Activated naive CD4-positive, alpha-beta T cell treated with anti-CD3 and anti-CD28 coated beads for 36 hours (primary cell): ENCODE measurements at regions of chrX and their contacts with region 1.

Region 1: DNA sequence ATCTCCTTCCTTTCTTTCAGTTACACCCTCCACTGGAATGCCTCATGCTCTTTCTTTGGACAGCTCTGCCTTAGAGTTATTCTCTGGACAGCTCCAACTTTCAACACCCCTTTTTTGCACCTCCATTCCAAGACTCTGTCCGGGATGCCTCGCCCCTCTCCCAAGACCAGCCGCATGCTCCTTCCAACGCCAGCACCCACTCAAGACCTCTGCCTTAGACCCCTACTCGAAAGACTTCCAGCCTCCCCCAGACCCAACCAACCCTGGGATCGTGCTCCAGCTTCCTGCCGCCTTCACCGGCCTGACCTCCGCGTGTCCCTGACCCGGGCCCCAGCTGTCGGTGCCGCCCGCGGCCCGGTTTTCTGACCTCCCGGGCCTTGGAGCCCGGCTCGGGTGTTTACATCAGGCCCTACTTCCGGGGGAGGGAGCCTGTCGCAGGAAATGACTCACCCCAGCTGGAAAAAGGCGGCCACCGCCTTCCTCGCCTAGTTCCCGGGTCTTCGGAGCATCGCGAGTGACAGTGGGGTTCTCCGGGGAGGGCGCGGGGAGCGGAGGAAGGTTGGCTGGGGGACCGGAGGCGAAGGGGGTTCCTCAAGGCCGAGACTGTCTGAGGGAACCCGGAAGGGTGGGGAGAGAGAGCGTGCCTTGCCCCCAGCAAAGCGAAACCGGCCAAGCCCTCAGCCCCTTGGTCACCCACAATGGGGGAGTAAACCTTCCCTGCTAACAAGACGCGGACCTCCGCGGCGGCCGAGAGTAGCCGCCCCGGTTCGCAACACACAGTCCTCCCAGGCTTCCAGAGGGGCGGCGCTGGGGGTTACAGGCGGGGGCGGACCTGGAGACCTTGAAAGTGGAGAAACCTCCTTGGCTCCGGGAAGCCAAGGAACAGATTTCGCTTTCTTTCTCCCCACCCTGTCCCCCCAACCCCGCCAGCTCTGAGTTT is at the start of gene WDR45:
- DNase-seq: peak; percentile 79
- H3K4me3 Mint-ChIP-seq: peak within 1 kb of the TSS; percentile 94
- H3K27ac Mint-ChIP-seq: peak within 1 kb of the TSS; percentile 96
- H3K4me1 Mint-ChIP-seq: peaks cover 11% of the 10 kb centered on the region
- H3K27me3 Mint-ChIP-seq: no peaks in the 10 kb centered on the region
- total RNA-seq, gene WDR45: 17.9 to 22.5 TPM

Region 2: DNA sequence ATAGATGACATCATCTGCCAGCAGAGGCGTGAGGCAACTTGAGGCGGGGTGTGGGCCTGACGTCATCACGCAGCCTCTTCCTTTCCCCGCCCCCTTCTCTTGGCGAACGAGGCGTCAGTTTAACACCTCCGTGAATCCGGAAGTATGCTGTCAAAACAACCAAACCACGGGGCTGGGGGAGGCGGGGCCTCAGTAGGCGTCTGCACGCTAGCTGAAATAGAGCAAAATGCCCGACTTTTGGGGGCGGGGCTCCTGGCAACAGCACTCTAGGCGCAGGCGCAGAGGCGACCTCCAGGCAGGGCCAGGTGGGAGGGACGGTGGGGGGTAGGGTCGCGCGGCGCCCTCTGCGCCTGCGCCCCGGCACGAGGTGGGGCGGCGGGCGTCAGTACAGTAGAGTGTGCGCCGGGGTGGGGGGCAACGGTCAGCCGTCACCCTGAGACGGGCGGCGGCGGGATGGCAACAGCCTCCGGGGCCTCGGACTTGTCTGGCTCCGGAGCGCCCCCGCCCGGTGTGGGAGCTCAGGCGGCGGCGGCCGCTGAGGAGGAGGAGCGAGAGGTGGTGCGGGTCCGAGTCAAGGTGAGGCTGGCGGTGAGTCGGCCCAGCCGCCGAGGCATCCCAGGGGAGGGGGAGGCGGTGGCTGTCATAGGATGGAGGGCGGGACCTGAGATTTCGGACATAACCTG is 540.3 kb before region 1 on chrX and contains the start of gene TBC1D25:
- CTCF ChIA-PET with region 1: no interaction called
- intact Hi-C with region 1: no loop called
- DNase-seq: peak; percentile 98
- H3K4me3 Mint-ChIP-seq: peak within 1 kb of the TSS; percentile 88
- H3K27ac Mint-ChIP-seq: peak within 1 kb of the TSS; percentile 93
- H3K4me1 Mint-ChIP-seq: peaks cover 12% of the 10 kb centered on the region
- H3K27me3 Mint-ChIP-seq: no peaks in the 10 kb centered on the region
- total RNA-seq, gene TBC1D25: 10.6 to 11.1 TPM

Region 3: GRCh38 chrX:48945516-48946348 is 134.0 kb before region 1 on chrX:
- CTCF ChIA-PET with region 1: no interaction called
- intact Hi-C with region 1: no loop called
- DNase-seq: peak; percentile 70
- H3K4me3 Mint-ChIP-seq: no peak overlapping the region
- H3K27ac Mint-ChIP-seq: peak overlapping the region; percentile 83
- H3K4me1 Mint-ChIP-seq: peaks cover 53% of the 10 kb centered on the region
- H3K27me3 Mint-ChIP-seq: no peaks in the 10 kb centered on the region

Region 4: GRCh38 chrX:49058794-49059193 is 21.0 kb before region 1 on chrX and contains the start of gene CCDC120:
- CTCF ChIA-PET with region 1: no interaction called
- intact Hi-C with region 1: no loop called
- DNase-seq: no peak
- H3K4me3 Mint-ChIP-seq: no peak within 1 kb of the TSS
- H3K27ac Mint-ChIP-seq: no peak within 1 kb of the TSS
- H3K4me1 Mint-ChIP-seq: peaks cover 23% of the 10 kb centered on the region
- H3K27me3 Mint-ChIP-seq: no peaks in the 10 kb centered on the region
- total RNA-seq, gene CCDC120: 2.1 to 2.2 TPM

Region 5: GRCh38 chrX:49100704-49101628 is 21.2 kb after region 1 on chrX:
- CTCF ChIA-PET with region 1: no interaction called
- intact Hi-C with region 1: loop called (anchors 2 kb)
- DNase-seq: peak; percentile 90
- H3K4me3 Mint-ChIP-seq: peak overlapping the region; percentile 90
- H3K27ac Mint-ChIP-seq: peak overlapping the region; percentile 89
- H3K4me1 Mint-ChIP-seq: peaks cover 8% of the 10 kb centered on the region
- H3K27me3 Mint-ChIP-seq: no peaks in the 10 kb centered on the region